AG04449 (cell line): ENCODE measurements at regions of chr6 and their contacts with region 1.

Region 1: DNA sequence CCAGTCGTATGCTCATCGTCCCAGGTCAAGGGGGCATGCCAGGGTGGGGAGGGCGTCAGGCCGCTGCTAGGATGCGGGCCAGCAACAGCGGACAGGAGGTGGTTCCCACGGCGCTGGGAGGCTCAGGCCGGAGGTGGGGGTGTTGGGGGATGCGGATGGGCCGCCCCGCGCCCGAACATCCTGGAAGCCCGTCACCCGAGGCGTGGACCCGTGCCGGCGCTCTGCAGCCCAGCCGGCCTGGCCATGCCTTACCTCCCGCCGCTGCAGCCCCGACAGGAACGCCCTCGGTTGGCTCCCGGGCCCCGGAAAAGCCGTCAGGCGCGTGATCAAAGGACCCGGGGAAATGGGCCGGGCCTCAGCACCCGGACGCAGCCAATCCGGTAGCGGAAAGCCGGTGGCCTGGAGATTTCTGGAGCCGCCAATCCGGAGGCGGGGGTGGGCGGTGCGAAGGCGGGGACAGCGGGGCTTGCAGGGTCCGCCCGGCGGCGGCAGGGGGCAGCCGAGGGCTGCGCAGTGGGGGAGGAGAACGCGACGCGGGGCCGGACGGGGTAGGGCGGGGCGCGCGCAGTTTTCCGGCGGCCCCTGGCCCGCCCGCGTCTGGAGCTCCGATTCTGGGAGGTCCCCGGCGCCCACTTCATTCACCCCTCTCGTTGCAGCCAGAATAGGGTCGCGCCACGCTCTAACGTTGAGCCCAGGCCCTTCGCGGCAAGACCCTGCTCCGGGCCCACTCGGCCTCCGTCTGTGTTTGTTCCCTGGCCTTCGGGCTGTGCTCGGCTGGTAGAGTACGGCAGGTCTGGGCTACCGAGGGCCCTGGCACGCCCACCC is at the start of gene SMIM29:
- DNase-seq: peak; percentile 57
- H3K4me3 ChIP-seq: peak within 1 kb of the TSS; percentile 87
- CTCF ChIP-seq: peak; percentile 90

Region 2: DNA sequence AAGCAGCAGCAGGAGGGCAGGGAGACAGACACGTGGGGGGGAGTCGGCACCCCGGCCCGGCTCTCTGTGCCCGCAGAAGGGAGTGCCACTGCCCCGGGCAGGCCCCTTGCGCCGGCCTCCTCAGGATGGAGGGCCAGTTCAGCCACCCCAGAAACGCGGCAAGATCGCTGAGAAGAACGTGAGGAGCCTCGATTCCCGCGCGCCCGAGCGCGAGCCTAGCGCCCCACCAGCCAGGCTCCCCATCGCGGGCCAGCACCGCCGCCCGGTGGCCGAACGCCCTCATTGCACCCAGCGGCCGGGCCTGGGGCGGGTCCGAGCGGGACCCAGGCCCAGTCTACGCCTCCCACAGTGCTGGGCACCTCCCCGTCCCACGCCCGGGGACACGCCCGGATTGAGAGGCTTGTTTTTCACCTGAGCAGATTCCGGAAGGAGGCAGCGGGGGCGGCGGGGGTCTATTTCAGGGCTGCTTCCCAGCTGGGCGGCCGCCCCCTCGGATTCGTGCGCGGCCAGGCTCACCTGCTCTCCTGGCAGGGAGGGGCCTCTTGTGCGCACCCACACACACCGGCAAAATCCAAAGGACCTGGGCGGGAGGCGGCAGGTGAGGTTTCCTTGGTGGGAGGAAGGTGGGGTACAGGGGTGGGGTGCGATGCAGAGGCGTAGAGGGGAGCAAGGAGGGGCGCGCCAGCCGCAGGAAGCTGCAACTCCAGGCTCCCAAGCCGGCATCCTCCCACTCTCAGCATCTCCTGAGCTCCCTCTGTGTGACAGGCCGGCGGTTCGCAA is 94.1 kb before region 1 on chr6:
- CTCF ChIA-PET with region 1: no interaction called
- POLR2A ChIA-PET with region 1: no interaction called
- DNase-seq: no peak
- H3K4me3 ChIP-seq: peak overlapping the region; percentile 42
- CTCF ChIP-seq: peak; percentile 94

Region 3: GRCh38 chr6:34223956-34224940 is 24.7 kb before region 1 on chr6:
- CTCF ChIA-PET with region 1: interaction called, 11 read pairs
- POLR2A ChIA-PET with region 1: interaction called, 5 read pairs
- DNase-seq: peak; percentile 63
- H3K4me3 ChIP-seq: peak overlapping the region; percentile 58
- CTCF ChIP-seq: no peak

Region 4: GRCh38 chr6:34267746-34268145 is 18.8 kb after region 1 on chr6:
- CTCF ChIA-PET with region 1: interaction called, 17 read pairs
- POLR2A ChIA-PET with region 1: no interaction called
- DNase-seq: no peak
- H3K4me3 ChIP-seq: no peak overlapping the region
- CTCF ChIP-seq: no peak

Region 5: DNA sequence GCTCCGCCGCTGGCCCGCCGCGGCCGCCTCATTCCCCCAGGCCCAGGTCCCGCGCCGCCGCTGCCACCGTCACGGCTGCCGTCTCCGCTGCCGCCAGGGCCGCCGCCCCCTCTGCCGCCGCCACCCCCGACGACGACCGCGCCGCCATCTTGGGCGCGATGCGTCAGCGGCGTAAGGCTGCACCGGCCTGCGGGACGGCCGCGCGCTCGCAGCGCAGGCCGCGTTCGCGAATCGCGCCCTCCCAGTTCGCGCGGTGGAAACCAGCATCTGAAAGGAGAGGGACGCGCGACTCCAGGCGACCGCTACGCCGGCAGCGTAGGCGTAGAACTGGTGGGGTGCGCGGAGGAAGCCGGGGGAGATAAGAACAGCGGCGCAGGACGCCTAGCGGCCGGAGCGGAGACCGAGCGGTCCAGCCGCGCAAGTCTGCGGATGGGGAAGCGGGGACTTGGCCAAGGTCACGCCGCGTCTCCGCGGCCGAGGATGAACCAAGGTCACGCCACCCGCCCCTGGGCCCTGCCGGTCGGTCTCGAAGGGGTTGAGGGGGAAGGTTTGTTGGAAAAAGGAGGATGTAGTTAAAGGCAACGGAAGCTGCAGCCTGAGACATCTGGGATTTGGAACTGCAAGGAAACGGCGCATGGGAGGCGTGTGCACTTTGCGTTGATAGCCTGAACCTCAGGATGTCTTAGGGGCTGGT is 143.7 kb after region 1 on chr6 and contains the start of gene NUDT3:
- CTCF ChIA-PET with region 1: interaction called, 27 read pairs
- POLR2A ChIA-PET with region 1: no interaction called
- DNase-seq: peak; percentile 49
- H3K4me3 ChIP-seq: peak within 1 kb of the TSS; percentile 83
- CTCF ChIP-seq: peak; percentile 91

Region 6: DNA sequence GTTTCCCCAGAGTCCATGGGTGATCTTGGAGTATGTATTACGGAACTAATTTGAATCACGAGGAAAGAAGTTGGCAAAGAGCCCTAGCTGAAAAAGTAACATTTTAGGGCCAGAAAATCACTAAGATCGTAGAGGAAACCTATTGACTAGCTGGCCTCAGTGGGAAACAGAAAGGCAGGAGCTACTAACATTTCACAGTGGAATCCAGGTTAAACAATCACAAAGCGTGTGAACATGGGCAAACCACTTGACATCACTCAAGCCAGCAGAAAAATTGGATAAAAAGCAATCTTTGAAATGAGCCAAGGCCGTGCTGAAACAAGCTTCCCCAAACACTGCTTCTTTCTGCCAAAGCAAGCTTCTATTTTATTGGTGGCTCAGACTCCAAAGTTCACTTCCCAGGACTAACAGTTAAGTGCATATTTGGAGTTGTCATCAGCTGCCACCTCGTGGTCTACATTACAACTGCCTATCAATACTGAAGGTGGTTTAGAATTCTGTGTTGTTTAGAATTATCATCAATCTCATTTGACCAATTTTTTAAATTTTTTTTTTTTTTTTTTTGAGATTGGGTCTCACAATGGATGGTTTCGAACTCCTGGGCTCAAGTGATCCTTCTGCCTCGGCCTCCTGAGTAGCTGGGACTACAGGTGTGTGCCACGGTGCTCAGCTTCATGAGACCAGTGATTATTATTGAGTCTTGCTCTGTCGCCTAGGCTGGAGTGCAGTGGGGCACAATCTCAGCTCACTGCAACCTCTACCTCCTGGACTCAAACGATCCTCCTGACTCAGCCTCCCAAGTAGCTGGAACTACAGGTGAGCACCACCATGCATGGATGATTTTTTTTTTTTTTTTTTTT is 166.3 kb after region 1 on chr6:
- CTCF ChIA-PET with region 1: interaction called, 34 read pairs
- POLR2A ChIA-PET with region 1: interaction called, 7 read pairs
- DNase-seq: no peak
- H3K4me3 ChIP-seq: no peak overlapping the region
- CTCF ChIP-seq: peak; percentile 33

Region 7: GRCh38 chr6:34425498-34426410 is 176.8 kb after region 1 on chr6 and contains the start of gene RPS10:
- CTCF ChIA-PET with region 1: interaction called, 5 read pairs
- POLR2A ChIA-PET with region 1: interaction called, 19 read pairs
- DNase-seq: peak; percentile 54
- H3K4me3 ChIP-seq: peak within 1 kb of the TSS; percentile 93
- CTCF ChIP-seq: no peak